MCF 10A (cell line): ENCODE measurements at regions of chr19 and their contacts with region 1.

Region 1: GRCh38 chr19:36528194-36528920 is at the start of gene ZNF260:
- DNase-seq: peak; percentile 95
- H3K4me3 Mint-ChIP-seq: peak within 1 kb of the TSS; percentile 96
- H3K27ac Mint-ChIP-seq: peak within 1 kb of the TSS; percentile 99
- H3K4me1 Mint-ChIP-seq: peaks cover 9% of the 10 kb centered on the region
- H3K27me3 Mint-ChIP-seq: no peaks in the 10 kb centered on the region
- CTCF ChIP-seq: no peak
- total RNA-seq, gene ZNF260: 13.8 and 14.5 TPM in 2 replicates

Region 2: DNA sequence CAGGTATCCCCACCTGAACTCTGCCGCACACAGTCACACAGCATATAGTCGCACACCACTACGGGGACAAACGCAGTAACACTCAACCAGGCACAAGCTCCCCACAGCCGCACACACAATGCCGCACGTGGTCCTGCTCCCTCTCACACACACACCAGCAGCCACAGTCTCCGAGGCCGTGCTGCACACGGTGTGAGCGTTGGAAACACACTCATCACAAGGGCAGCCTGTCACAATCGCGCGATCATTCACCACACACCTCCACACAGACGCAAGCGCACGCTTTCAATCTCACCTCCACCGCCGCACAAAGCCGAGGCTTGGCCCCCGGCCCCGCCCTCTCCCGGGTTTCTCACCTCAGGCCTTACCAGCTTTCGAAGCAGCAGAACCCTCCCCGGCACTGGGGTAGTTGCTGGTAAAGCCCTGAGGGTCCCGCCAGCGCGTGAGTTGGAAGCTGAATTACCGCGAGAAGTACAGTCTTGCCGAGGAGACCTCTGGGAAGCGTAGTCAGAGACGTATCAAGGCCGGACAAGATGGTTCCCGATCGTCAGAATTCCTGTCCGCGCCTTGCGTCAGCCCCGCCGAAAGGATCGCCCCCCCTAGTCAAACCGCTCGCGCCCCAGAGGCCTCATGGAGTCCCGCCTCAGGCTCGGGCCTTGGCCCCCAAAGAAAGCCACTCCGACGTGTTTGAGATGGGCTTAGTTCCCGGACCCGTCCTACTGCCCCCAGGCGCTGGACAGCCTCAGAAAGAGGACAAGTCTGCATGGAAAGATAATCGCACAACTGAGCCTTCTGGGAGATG is 39.0 kb before region 1 on chr19 and contains the start of gene ZNF566:
- CTCF ChIA-PET with region 1: interaction called, 3 read pairs
- POLR2A ChIA-PET with region 1: interaction called, 50 read pairs
- intact Hi-C with region 1: loop called (anchors 2 kb)
- DNase-seq: peak; percentile 96
- H3K4me3 Mint-ChIP-seq: peak within 1 kb of the TSS; percentile 98
- H3K27ac Mint-ChIP-seq: peak within 1 kb of the TSS; percentile 99
- H3K4me1 Mint-ChIP-seq: peaks cover 6% of the 10 kb centered on the region
- H3K27me3 Mint-ChIP-seq: no peaks in the 10 kb centered on the region
- CTCF ChIP-seq: no peak
- total RNA-seq, gene ZNF566: 3.9 and 6.6 TPM in 2 replicates

Region 3: DNA sequence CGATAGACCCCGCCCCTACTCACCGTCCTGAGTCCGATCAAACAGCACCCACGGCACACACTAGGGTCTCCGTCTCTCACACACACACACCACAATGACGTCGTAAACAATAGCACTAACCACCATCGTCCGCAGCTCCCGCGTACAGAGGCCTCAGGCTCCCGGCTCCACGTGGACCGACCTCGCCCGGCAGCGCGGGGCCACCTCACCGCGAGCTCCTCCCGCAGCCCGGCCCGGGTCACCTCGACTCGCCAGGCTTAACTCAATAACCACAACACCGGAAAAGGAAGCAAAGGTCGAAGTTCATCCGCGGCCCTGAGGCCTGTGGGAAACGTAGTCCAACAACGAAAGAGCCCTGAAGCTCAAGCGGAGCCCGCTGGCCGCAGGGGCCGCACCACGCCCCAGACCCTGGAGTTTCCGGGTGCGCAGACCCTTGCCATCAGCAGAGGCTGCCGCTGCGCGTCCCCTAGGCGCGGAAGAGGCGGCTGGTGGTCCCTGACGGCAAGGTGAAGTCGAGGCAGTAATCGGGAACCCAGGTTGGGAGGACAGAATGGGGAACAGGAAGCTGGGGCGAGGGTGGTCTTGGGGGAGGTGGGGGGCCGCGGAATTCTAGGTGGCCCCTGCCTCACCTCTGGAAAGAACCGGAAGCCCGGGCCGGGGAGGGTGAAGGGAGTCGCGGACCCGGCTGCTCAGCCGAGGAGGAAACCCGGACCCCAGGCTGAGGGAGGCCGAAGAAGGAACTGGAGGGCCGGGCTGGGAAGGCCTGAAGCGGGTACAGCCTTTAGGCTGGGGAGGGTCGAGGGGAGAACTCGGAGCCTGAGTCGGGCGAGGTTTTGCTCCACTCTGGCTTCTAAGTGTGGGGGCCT is 44.9 kb after region 1 on chr19 and contains the start of gene ZNF529:
- CTCF ChIA-PET with region 1: interaction called, 5 read pairs
- POLR2A ChIA-PET with region 1: interaction called, 67 read pairs
- intact Hi-C with region 1: loop called (anchors 2 kb)
- DNase-seq: peak; percentile 93
- H3K4me3 Mint-ChIP-seq: peak within 1 kb of the TSS; percentile 93
- H3K27ac Mint-ChIP-seq: peak within 1 kb of the TSS; percentile 99
- H3K4me1 Mint-ChIP-seq: peaks cover 26% of the 10 kb centered on the region
- H3K27me3 Mint-ChIP-seq: no peaks in the 10 kb centered on the region
- CTCF ChIP-seq: no peak
- total RNA-seq, gene ZNF529: 11.4 and 12.8 TPM in 2 replicates

Region 4: GRCh38 chr19:36665832-36666231 is 137.5 kb after region 1 on chr19:
- CTCF ChIA-PET with region 1: interaction called, 4 read pairs
- POLR2A ChIA-PET with region 1: interaction called, 9 read pairs
- intact Hi-C with region 1: loop called (anchors 10 kb)
- DNase-seq: no peak
- H3K4me3 Mint-ChIP-seq: peak overlapping the region; percentile 94
- H3K27ac Mint-ChIP-seq: peak overlapping the region; percentile 93
- H3K4me1 Mint-ChIP-seq: peaks cover 6% of the 10 kb centered on the region
- H3K27me3 Mint-ChIP-seq: no peaks in the 10 kb centered on the region
- CTCF ChIP-seq: no peak

Region 5: GRCh38 chr19:36837906-36838783 is 309.8 kb after region 1 on chr19 and contains the start of gene ZNF790:
- CTCF ChIA-PET with region 1: no interaction called
- POLR2A ChIA-PET with region 1: interaction called, 3 read pairs
- intact Hi-C with region 1: loop called (anchors 10 kb)
- DNase-seq: peak; percentile 79
- H3K4me3 Mint-ChIP-seq: no peak within 1 kb of the TSS
- H3K27ac Mint-ChIP-seq: no peak within 1 kb of the TSS
- H3K4me1 Mint-ChIP-seq: no peaks in the 10 kb centered on the region
- H3K27me3 Mint-ChIP-seq: no peaks in the 10 kb centered on the region
- CTCF ChIP-seq: no peak
- total RNA-seq, gene ZNF790: 8.2 and 8.7 TPM in 2 replicates